ENCODE measurements at regions of chr19 and their contacts with region 1.

Region 1: GRCh38 chr19:588093-588740 is 1.5 kb upstream of the HCN2 start:
- DNase-seq: peak; percentile 38
- H3K4me3 Mint-ChIP-seq: no peak overlapping the region
- H3K27ac Mint-ChIP-seq: no peak overlapping the region
- H3K4me1 Mint-ChIP-seq: no peaks in the 10 kb centered on the region
- H3K27me3 Mint-ChIP-seq: peaks cover 15% of the 10 kb centered on the region

Region 2: GRCh38 chr19:732148-733069 is 144.2 kb after region 1 on chr19:
- intact Hi-C with region 1: loop called (anchors 5 kb)
- DNase-seq: no peak
- H3K4me3 Mint-ChIP-seq: no peak overlapping the region
- H3K27ac Mint-ChIP-seq: no peak overlapping the region
- H3K4me1 Mint-ChIP-seq: no peaks in the 10 kb centered on the region
- H3K27me3 Mint-ChIP-seq: no peaks in the 10 kb centered on the region

Region 3: DNA sequence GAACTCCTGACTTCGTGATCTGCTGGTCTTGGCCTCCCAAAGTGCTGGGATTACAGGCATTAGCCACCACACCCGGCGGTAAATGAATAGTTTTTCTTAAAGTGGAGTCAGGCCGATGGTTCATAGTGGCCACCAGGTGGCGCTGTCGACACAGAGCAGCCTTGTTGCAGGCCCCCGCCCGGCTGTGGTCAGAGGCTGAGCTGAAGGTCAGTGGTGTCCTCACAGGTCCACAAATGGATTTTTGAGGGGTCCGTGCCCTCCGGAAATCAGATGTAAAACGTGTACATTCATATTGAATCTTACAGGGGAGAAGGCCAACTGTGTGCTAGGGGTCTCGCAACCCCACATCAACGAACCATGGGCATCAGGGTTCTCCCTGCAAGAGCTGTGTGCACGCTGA is 382.5 kb after region 1 on chr19:
- intact Hi-C with region 1: no loop called
- DNase-seq: no peak
- H3K4me3 Mint-ChIP-seq: no peak overlapping the region
- H3K27ac Mint-ChIP-seq: no peak overlapping the region
- H3K4me1 Mint-ChIP-seq: no peaks in the 10 kb centered on the region
- H3K27me3 Mint-ChIP-seq: no peaks in the 10 kb centered on the region